ENCODE measurements at regions of chr14 and their contacts with region 1.

Region 1: DNA sequence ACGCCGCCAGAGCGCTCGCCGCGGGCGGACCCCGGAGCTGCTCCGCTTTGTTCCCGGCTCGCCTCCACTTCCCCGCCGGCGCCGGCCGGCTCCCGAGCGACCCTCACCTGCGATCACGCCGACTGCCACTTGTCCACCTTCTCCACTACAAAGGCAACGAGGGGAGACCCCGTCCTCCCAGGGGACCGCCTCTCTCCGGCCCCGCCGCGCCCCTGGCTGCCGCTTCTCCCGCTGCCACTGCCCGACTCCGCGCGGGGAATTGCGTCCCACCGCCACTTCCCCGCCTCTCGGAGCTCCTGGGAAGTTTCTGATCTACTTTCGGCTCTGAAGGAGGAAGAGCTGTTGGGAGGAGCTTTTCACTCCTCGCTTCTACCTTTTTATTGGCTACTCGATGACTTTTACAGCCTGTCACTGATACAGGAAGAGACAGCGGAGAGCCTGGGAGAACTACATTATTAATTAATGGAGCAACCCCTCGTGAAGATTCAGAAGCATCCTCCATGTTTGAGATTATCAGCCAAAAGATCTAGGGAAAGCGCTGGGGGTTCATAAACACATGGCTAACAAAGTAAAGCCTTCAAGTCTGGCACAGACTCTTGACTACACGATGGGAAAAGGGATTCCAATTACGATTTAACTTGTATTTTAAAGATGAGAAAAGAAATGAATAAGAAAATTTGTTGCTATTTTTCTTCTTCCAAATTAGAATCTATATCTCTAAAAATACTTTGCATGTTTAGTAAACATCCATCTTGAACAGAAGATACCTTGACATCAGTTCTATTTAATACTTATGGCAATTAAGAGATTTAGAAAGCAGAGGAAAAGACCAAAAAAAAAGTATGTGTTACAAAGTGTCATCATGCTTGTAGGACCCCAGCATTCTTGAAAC is at the start of gene BAZ1A:
- DNase-seq: peak; percentile 92
- H3K4me3 ChIP-seq: peak within 1 kb of the TSS; percentile 75 to 96 (median 91)
- H3K27ac ChIP-seq: peak within 1 kb of the TSS; percentile 99 to 100 (median 99)
- H3K4me1 ChIP-seq: peaks cover 9 to 18% (median 15%) of the 10 kb centered on the region in 4 donors
- H3K27me3 ChIP-seq: no peaks in the 10 kb centered on the region
- CTCF ChIP-seq: peak in 1 of 3 experiments; percentile 33
- EP300 ChIP-seq: no peak
- POLR2A ChIP-seq: peak; percentile 81
- total RNA-seq, gene BAZ1A: 14.6 to 27.3 (median 24.5) TPM

Region 2: GRCh38 chr14:34714320-34715126 is 160.8 kb before region 1 on chr14 and contains the start of gene CFL2:
- intact Hi-C with region 1: loop called (anchors 10 kb)
- DNase-seq: peak; percentile 94
- H3K4me3 ChIP-seq: peak within 1 kb of the TSS; percentile 79 to 95 (median 86)
- H3K27ac ChIP-seq: peak within 1 kb of the TSS; percentile 98 to 100 (median 98)
- H3K4me1 ChIP-seq: peaks cover 17 to 46% (median 45%) of the 10 kb centered on the region in 4 donors
- H3K27me3 ChIP-seq: no peaks in the 10 kb centered on the region
- CTCF ChIP-seq: no peak
- EP300 ChIP-seq: no peak
- POLR2A ChIP-seq: peak; percentile 88
- total RNA-seq, gene CFL2: 247 to 265 (median 257) TPM

Region 3: GRCh38 chr14:34797747-34798583 is 77.3 kb before region 1 on chr14:
- intact Hi-C with region 1: no loop called
- DNase-seq: no peak
- H3K4me3 ChIP-seq: no peak overlapping the region
- H3K27ac ChIP-seq: no peak overlapping the region
- H3K4me1 ChIP-seq: no peaks in the 10 kb centered on the region
- H3K27me3 ChIP-seq: no peaks in the 10 kb centered on the region
- CTCF ChIP-seq: no peak
- EP300 ChIP-seq: no peak
- POLR2A ChIP-seq: no peak

Region 4: DNA sequence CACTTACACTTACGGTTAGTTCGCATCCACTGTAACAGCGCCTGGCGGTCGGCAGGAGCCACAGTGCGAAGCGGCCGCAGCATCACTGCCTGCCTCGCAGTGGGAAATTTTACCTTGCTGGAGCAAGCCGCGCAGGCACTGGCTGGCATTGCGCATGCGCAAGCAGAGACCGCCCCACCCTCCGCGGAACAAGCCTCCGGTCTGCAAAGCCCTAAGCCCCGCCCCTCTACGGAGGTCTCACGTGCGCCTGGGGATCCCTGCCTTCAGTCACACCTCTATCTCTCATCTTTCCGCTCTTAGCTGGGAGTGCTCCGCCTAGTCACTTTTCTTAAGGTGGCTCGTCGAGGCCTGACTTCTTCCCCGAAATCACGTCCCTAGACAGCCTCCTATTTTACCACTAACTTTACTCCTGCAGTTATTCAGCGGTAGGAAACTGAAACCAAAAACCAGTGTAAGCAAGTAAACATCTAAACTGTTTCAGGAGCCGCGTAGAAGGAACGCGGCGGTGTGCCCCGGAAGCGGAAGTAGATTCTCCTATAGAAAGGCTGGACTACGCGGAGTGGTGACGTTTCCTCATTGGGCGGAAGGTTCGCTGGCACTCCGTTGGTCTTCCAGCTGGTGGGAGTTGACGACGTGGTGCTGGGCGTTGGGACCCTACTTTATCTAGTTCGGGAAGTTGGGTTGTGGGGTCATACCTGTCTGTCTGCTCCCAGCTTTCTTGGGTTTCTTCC is 107.3 kb after region 1 on chr14 and contains the start of gene SRP54:
- intact Hi-C with region 1: loop called (anchors 1 kb)
- DNase-seq: peak; percentile 99
- H3K4me3 ChIP-seq: peak within 1 kb of the TSS; percentile 73 to 93 (median 80)
- H3K27ac ChIP-seq: peak within 1 kb of the TSS; percentile 92 to 98 (median 97)
- H3K4me1 ChIP-seq: peaks cover 36 to 55% (median 44%) of the 10 kb centered on the region in 4 donors
- H3K27me3 ChIP-seq: no peaks in the 10 kb centered on the region
- CTCF ChIP-seq: peak in 2 of 3 experiments; percentile 26 to 33
- EP300 ChIP-seq: no peak
- POLR2A ChIP-seq: peak; percentile 45
- total RNA-seq, gene SRP54: 31.2 to 52.7 (median 39.3) TPM

Measured in esophagus muscularis mucosa (tissue), 4 donors.